ENCODE measurements at regions of chr15 and their contacts with region 1.

Region 1: DNA sequence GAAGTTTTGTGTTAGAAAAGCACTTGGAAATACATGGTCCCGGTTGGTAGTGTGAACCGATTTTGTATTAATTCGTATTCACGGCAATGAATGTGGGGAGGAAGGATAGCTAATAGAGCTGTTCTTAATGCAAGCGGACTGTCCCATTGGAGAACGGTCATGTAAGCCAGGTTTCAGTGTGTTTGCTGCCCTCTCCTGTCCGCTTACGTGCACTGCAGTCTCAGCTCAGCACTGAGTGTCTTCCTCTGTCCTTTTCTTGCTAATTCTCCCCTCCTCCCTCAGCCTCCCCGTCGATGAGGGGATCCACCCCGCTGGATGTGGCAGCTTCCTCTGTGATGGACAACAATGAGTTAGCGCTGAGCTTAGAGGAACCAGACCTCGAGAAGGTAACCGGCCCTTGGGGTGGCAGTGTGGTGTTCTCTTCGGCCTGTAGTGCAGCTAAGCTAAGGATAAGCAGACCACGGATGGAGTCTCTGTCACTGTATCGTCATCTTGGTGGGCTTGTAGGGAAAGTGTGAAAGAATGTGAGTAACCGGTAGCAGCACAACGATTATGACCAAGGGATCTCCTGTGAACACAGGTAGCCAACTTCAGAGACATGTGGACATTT is 267.5 kb upstream of the CHRM5 start:
- DNase-seq: peak; percentile 50 to 96 (median 80)

Region 2: DNA sequence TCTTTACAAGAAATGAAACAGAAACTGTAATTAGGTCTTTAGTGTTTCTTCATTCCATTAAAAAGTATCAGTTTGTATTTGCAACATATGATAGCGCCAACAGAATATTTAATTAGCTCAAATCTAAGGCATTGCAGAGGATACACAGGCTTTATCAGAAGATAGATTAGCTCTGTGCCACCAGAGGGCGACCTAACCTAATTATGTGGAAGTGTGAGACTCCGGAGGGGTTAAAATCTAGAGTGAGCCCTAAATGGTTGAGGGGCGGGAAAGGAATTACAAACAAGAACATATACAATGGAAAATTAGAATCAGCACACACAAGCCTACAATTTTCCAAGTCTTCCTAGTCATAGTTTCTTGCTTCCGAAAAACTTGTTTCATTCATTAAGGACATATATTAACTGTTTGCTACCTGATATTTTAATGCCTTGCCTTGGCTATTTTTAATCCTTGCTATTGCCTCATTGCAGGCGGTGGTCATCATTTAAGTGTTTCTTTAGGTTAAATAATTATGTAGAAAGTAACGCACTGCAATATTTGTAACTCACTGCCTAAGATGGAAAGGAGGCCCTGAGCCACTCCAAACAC is 408.0 kb before region 1 on chr15:
- intact Hi-C with region 1: loop called (anchors 1 kb)
- DNase-seq: peak in 5 of 10 donors; percentile 41 to 70 (median 62)

Region 3: DNA sequence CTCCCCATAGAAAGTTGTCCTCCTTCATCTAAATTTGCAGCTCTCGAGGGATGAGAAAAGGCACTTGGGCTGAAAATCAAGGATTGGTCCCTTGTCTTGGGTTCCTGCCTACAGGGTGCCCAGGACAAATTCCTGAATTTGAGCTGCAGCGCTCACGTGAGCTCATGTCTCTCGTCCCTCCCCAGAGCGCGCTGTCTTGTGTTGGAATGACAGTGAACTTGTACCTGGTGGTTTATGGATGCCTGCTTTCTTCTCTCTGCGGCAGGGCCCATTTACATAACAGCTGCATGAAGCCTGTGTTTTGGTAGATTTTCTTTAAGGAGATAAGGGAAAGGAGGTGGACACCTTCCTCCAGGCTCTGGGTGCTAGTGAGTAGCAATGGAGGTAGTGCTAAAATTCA is 385.8 kb before region 1 on chr15:
- intact Hi-C with region 1: loop called (anchors 5 kb)
- DNase-seq: no peak

Region 4: DNA sequence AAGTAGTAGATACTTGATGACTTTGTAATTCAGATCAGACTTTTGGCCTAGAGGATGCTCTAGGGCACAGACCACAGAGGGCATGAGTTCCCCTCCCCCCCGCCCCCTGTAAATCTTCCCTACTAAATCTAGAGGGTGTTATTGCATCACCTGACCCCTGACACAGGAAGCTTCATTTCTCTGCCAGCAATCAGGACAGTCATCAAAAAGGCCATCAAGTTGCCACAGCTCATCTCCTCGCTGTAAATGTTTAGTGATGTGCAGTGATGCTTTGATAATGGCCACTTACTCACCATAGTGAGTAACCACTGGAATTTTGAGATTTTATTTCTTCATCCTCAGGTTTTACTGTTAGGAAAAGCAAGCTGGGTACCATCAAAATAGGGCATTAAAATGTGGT is 21.7 kb before region 1 on chr15:
- intact Hi-C with region 1: no loop called
- DNase-seq: no peak

Measured in posterior cingulate gyrus (tissue), 11 donors.